ENCODE measurements at regions of chr1 and their contacts with region 1.

Region 1: DNA sequence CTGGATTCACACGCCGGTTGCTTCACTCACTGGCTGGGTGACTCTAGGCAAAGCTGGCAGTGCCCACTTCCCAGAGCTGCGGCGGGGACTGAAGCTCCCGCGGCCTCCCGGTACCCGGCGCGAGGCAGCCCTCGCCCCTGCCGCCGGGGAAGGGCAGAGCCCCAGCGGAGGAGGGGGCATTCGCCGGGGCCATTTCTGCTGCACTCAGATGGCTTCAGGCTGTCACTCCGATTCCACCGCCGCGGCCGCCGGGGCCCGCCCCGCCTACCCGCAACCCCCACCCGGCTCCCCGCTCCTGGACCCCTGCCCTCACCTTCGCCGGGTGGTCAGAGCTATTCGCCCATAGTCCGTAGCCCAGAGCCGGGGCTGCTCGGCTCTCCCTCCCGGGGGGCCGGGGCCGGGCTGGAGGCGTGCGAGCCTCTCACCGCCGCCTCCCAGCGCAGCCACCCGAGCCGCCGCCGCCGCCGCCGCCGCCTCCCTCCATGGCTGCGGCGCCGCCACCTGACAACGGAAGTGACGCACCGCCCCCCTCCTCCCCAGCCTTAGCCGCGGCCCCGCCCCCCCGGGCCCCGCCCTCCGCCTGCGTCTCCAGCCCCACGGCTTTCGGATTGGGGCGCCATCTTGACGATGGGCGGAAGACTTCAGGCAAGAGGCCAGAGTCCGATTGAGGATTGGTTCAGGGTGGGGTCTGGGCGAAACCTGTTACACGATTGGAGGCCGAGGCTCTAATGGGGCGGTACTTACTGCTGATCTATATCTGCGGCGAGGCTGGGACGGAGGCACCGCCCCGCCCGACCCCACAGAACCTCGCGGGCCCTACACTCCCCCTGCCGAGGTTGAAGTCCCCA is at the start of gene STK40:
- DNase-seq: peak; percentile 97 to 99 (median 98)
- ATAC-seq: peak; percentile 84
- H3K4me3 ChIP-seq: peak within 1 kb of the TSS; percentile 72
- H3K4me3 Mint-ChIP-seq: peak within 1 kb of the TSS; percentile 89
- H3K27ac ChIP-seq: peak within 1 kb of the TSS; percentile 92
- H3K27ac Mint-ChIP-seq: peak within 1 kb of the TSS; percentile 98
- H3K4me1 ChIP-seq: peaks cover 56% of the 10 kb centered on the region
- H3K4me1 Mint-ChIP-seq: peaks cover 59% of the 10 kb centered on the region
- H3K27me3 ChIP-seq: no peaks in the 10 kb centered on the region
- H3K27me3 Mint-ChIP-seq: no peaks in the 10 kb centered on the region
- CTCF ChIP-seq: no peak
- total RNA-seq, gene STK40: 17.8 to 20.7 TPM

Region 2: DNA sequence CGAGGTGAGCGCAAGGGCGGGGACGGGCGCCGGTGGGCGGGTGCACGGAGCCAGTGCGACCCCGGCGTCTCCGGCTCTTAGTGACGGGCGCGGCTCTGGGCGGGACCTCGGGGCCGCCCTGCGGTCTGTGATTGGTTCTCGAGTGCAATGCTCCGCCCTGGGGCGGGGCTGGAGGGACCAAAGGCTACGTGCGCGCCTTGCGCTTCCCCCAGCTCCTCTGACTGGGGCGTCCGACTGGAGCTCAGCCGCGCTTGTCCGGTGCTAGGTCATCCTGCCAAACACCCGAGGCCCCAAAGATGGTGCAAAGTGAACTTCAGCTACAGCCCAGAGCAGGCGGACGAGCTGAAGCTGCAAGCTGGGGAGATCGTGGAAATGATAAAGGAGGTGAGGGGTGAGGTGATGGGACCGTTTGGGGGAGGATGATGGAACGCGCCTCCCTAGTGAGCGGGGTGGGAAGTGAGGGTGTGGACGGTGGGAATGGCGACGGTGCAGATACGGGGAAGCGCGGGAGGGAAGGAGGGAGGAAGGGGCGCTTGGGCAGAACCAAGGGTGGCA is 78.7 kb before region 1 on chr1:
- CTCF ChIA-PET with region 1: interaction called, 4 read pairs
- POLR2A ChIA-PET with region 1: interaction called, 10 read pairs
- intact Hi-C with region 1: loop called in 1 of 2 experiments (anchors 5 kb)
- DNase-seq: peak; percentile 85 to 96 (median 90)
- ATAC-seq: peak; percentile 98
- H3K4me3 ChIP-seq: peak overlapping the region; percentile 64
- H3K4me3 Mint-ChIP-seq: peak overlapping the region; percentile 94
- H3K27ac ChIP-seq: peak overlapping the region in 1 of 2 donors; percentile 34
- H3K27ac Mint-ChIP-seq: peak overlapping the region; percentile 78
- H3K4me1 ChIP-seq: peaks cover 24% of the 10 kb centered on the region
- H3K4me1 Mint-ChIP-seq: peaks cover 16% of the 10 kb centered on the region
- H3K27me3 ChIP-seq: no peaks in the 10 kb centered on the region
- H3K27me3 Mint-ChIP-seq: no peaks in the 10 kb centered on the region
- CTCF ChIP-seq: no peak

Region 3: DNA sequence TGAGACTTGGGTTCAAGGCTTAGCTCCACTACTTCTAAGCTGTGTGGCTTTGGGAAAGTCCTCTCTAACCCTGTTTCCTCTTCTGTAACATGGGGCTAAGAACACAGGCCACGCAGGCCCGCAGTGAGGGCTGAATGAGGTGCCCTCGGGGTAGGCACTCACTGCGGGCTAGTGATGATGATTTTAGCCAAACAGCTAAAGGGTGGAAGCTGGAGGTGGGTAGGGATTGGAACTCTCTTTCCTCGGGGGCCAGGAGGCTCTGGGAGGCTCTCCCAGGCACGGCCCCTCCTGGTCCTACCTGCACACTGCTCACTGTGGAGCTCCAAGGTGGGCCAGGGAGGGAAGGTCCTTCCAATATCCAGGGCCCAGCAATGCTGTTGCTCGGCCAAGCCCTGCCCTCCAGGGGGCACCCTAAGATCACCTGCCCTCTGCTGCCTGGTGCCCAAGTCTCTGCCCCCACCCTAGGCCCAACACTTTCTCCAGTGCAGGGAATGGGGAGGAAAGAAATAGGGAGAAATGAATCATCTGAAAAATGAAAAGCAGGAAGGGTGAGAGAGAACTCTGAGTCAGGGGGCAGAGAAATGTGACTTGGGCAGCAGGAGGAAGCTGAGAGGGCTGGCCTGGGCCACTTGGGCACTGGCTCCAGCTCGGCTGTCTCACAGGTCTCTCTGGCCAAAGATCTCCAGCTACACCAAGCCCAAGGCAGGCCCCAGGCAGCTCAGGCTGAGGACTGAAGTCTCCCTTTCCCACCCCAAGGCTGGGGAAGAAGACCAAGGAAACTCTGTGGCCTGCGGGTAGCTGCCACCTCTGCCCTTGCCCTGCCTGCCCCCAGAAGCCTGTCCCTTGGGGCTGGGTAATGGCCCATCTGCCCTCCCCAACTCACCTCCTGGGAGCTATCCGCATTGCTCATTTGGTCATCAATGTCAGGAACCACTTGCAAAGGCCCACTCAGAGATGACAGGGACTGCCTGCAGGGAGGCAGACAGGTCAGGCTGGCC is 42.9 kb before region 1 on chr1:
- CTCF ChIA-PET with region 1: interaction called, 15 read pairs
- POLR2A ChIA-PET with region 1: interaction called, 10 read pairs
- intact Hi-C with region 1: loop called in 1 of 2 experiments (anchors 5 kb)
- DNase-seq: peak; percentile 44 to 83 (median 63)
- ATAC-seq: peak; percentile 92
- H3K4me3 ChIP-seq: no peak overlapping the region
- H3K4me3 Mint-ChIP-seq: no peak overlapping the region
- H3K27ac ChIP-seq: no peak overlapping the region
- H3K27ac Mint-ChIP-seq: peak overlapping the region; percentile 58
- H3K4me1 ChIP-seq: peaks cover 26% of the 10 kb centered on the region
- H3K4me1 Mint-ChIP-seq: peaks cover 19% of the 10 kb centered on the region
- H3K27me3 ChIP-seq: no peaks in the 10 kb centered on the region
- H3K27me3 Mint-ChIP-seq: no peaks in the 10 kb centered on the region
- CTCF ChIP-seq: peak; percentile 79

Region 4: GRCh38 chr1:36397378-36398230 is 12.0 kb after region 1 on chr1 and contains the start of gene LSM10:
- CTCF ChIA-PET with region 1: interaction called, 6 read pairs
- POLR2A ChIA-PET with region 1: interaction called, 18 read pairs
- intact Hi-C with region 1: loop called (anchors 1 kb)
- DNase-seq: peak; percentile 76 to 96 (median 88)
- ATAC-seq: peak; percentile 93
- H3K4me3 ChIP-seq: peak within 1 kb of the TSS; percentile 84
- H3K4me3 Mint-ChIP-seq: peak within 1 kb of the TSS; percentile 97
- H3K27ac ChIP-seq: peak within 1 kb of the TSS; percentile 72 to 85
- H3K27ac Mint-ChIP-seq: peak within 1 kb of the TSS; percentile 92
- H3K4me1 ChIP-seq: peaks cover 44% of the 10 kb centered on the region
- H3K4me1 Mint-ChIP-seq: peaks cover 34% of the 10 kb centered on the region
- H3K27me3 ChIP-seq: no peaks in the 10 kb centered on the region
- H3K27me3 Mint-ChIP-seq: no peaks in the 10 kb centered on the region
- CTCF ChIP-seq: no peak
- total RNA-seq, gene LSM10: 25.6 to 26.0 TPM

Region 5: GRCh38 chr1:36576118-36576517 is 190.5 kb after region 1 on chr1:
- CTCF ChIA-PET with region 1: no interaction called
- POLR2A ChIA-PET with region 1: no interaction called
- intact Hi-C with region 1: no loop called
- DNase-seq: peak; percentile 16 to 70 (median 38)
- ATAC-seq: no peak
- H3K4me3 ChIP-seq: no peak overlapping the region
- H3K4me3 Mint-ChIP-seq: no peak overlapping the region
- H3K27ac ChIP-seq: no peak overlapping the region
- H3K27ac Mint-ChIP-seq: no peak overlapping the region
- H3K4me1 ChIP-seq: no peaks in the 10 kb centered on the region
- H3K4me1 Mint-ChIP-seq: no peaks in the 10 kb centered on the region
- H3K27me3 ChIP-seq: peaks cover 4 to 19% of the 10 kb centered on the region in 2 experiments
- H3K27me3 Mint-ChIP-seq: peaks cover 53% of the 10 kb centered on the region
- CTCF ChIP-seq: peak; percentile 72

Measured in CD4-positive, alpha-beta T cell (primary cell).